ENCODE measurements at regions of chr16 and their contacts with region 1.

Region 1: GRCh38 chr16:56950881-56951771 is 10.6 kb upstream of the CETP start:
- DNase-seq: peak; percentile 60 to 65
- ATAC-seq: peak; percentile 76 to 93
- H3K4me3 ChIP-seq: no peak overlapping the region
- H3K27ac ChIP-seq: no peak overlapping the region
- H3K4me1 ChIP-seq: no peaks in the 10 kb centered on the region
- CTCF ChIP-seq: peak; percentile 58
- EP300 ChIP-seq: no peak
- POLR2A ChIP-seq: no peak
- RAD21 ChIP-seq: peak; percentile 64 to 73

Region 2: DNA sequence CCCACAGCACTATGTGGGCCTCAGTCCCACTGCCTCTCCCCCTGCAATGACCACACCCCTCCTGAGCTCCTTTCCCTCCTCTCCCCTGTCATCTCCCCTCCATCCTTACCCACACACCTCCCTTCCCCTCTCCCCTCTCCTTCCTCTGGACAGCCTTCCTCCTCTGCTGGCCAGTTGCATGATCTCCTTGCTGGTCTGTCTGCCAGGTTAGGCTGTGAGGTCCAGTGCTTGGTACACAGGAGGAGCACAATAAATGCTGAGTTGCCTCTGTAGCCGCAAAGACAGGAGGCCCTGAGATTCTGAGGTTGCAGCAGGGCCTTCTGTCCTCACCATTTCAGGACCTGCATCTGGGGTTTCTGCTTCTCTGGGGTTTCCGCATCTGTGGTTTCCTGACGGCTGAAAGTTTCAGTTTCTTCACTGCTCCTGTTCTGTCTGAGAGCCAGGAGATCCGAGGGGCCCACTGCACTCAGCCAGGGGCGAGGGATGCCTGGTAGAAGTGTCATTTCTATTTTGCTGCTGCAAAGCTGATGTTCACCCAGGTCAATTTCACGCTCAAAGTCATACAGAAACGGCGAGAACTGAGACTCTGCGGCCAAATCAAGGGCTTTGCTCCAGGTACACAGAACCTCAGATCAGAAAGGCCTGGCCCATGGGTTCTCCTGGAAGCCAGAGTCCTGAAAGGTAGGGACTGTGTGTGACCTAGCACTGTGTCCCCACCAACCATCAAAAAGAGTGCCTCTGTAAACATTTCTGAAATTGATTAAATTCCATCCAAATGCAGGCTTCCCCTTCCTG is 90.7 kb before region 1 on chr16:
- CTCF ChIA-PET with region 1: interaction called, 48 read pairs
- POLR2A ChIA-PET with region 1: no interaction called
- DNase-seq: no peak
- ATAC-seq: no peak
- H3K4me3 ChIP-seq: no peak overlapping the region
- H3K27ac ChIP-seq: peak overlapping the region; percentile 34 to 35; a peak in 4 of 6 replicates
- H3K4me1 ChIP-seq: peaks cover 27% of the 10 kb centered on the region
- CTCF ChIP-seq: no peak
- EP300 ChIP-seq: no peak
- POLR2A ChIP-seq: no peak
- RAD21 ChIP-seq: no peak

Region 3: GRCh38 chr16:56876048-56876682 is 75.0 kb before region 1 on chr16:
- CTCF ChIA-PET with region 1: no interaction called
- POLR2A ChIA-PET with region 1: no interaction called
- DNase-seq: no peak
- ATAC-seq: no peak
- H3K4me3 ChIP-seq: no peak overlapping the region
- H3K27ac ChIP-seq: no peak overlapping the region
- H3K4me1 ChIP-seq: no peaks in the 10 kb centered on the region
- CTCF ChIP-seq: no peak
- EP300 ChIP-seq: no peak
- POLR2A ChIP-seq: no peak
- RAD21 ChIP-seq: no peak